Ovary (tissue), 10 donors: ENCODE measurements at regions of chr15 and their contacts with region 1.

Region 1: DNA sequence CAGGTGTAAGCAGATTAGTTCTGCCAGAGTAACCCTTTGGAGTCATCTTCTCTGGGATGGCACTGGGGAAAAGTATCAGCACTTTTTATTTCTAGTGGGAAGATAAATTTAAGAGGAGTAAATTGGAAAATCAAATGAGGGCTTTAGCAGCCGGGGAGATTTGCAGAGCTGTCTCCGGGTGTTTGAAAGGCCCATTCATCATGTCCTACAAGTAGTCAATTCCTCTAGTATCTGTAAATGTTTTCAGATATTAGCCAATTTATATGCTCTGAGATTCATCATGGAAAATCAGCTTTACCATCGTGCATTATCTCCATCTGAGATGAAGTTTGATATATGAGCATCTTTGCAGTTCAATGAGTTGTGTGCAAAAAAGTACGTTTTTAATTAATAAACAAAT is 93.6 kb downstream of the CDIN1 start:
- DNase-seq: no peak
- H3K4me3 ChIP-seq: no peak overlapping the region
- H3K27ac ChIP-seq: no peak overlapping the region
- H3K4me1 ChIP-seq: no peaks in the 10 kb centered on the region
- H3K27me3 ChIP-seq: no peaks in the 10 kb centered on the region
- CTCF ChIP-seq: no peak
- EP300 ChIP-seq: no peak
- POLR2A ChIP-seq: no peak

Region 2: GRCh38 chr15:36773698-36774097 is 100.7 kb after region 1 on chr15:
- intact Hi-C with region 1: loop called in 1 of 4 experiments (anchors 2 kb)
- DNase-seq: no peak
- H3K4me3 ChIP-seq: no peak overlapping the region
- H3K27ac ChIP-seq: no peak overlapping the region
- H3K4me1 ChIP-seq: no peaks in the 10 kb centered on the region
- H3K27me3 ChIP-seq: no peaks in the 10 kb centered on the region
- CTCF ChIP-seq: no peak
- EP300 ChIP-seq: no peak
- POLR2A ChIP-seq: no peak

Region 3: GRCh38 chr15:37007301-37007700 is 334.3 kb after region 1 on chr15:
- intact Hi-C with region 1: no loop called
- DNase-seq: no peak
- H3K4me3 ChIP-seq: no peak overlapping the region
- H3K27ac ChIP-seq: no peak overlapping the region
- H3K4me1 ChIP-seq: no peaks in the 10 kb centered on the region
- H3K27me3 ChIP-seq: no peaks in the 10 kb centered on the region
- CTCF ChIP-seq: no peak
- EP300 ChIP-seq: no peak
- POLR2A ChIP-seq: no peak